ENCODE measurements at regions of chr6 and their contacts with region 1.

Region 1: DNA sequence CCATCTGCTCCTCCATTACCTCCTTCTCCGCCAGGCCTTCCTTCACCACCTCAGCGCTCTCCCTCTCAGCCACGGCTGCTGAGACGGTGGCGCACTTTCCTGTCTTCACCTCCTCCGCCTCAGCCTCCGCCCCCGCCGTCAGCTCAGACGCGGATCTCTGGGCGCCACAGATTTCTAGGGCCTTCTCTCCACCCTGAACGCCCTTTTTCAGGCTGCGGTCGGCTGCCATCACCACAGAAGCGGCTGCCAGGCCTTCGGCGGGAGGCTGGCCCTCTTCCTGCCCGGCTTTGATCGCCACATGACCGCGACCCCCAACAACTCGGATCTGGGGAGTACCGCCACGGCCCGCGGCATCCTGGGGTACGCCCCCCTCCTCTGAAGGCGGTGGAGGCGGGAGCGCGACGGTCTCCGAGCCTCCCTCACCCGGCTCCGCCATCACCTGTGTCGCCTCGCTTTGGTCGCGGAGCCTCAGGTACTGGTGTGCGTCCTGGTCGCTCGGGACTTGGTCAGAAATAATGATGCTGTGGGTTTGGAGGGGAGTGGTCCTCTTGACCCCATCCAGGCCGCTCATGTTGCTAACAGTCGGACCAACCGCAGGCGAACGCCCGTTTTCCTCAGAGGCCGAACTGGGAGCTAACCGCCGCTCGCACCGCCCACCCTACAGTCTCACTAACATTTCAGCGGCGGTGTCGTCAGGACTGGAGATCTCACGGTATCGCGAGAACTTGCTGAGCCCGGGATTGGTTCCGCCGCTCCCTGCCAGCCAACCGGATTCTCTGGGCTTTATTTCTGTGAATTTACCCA is at the start of gene TSPYL1:
- DNase-seq: peak; percentile 93 to 97 (median 96)
- ATAC-seq: peak; percentile 94 to 98 (median 96)
- H3K4me3 ChIP-seq: peak within 1 kb of the TSS; percentile 59 to 98 (median 86)
- H3K27ac ChIP-seq: peak within 1 kb of the TSS; percentile 91 to 99 (median 98)
- H3K4me1 ChIP-seq: peaks cover 6 to 43% (median 19%) of the 10 kb centered on the region in 3 donors
- H3K27me3 ChIP-seq: no peaks in the 10 kb centered on the region
- CTCF ChIP-seq: no peak
- total RNA-seq, gene TSPYL1: 29.4 to 50.3 (median 44.0) TPM

Region 2: GRCh38 chr6:116238083-116238482 is 41.4 kb before region 1 on chr6:
- intact Hi-C with region 1: no loop called
- DNase-seq: no peak
- ATAC-seq: no peak
- H3K4me3 ChIP-seq: no peak overlapping the region
- H3K27ac ChIP-seq: no peak overlapping the region
- H3K4me1 ChIP-seq: no peaks in the 10 kb centered on the region
- H3K27me3 ChIP-seq: no peaks in the 10 kb centered on the region
- CTCF ChIP-seq: no peak

Region 3: GRCh38 chr6:116528780-116529179 is 249.3 kb after region 1 on chr6:
- intact Hi-C with region 1: loop called in 1 of 3 experiments (anchors 10 kb)
- DNase-seq: no peak
- ATAC-seq: no peak
- H3K4me3 ChIP-seq: no peak overlapping the region
- H3K27ac ChIP-seq: no peak overlapping the region
- H3K4me1 ChIP-seq: no peaks in the 10 kb centered on the region
- H3K27me3 ChIP-seq: no peaks in the 10 kb centered on the region
- CTCF ChIP-seq: no peak

Region 4: DNA sequence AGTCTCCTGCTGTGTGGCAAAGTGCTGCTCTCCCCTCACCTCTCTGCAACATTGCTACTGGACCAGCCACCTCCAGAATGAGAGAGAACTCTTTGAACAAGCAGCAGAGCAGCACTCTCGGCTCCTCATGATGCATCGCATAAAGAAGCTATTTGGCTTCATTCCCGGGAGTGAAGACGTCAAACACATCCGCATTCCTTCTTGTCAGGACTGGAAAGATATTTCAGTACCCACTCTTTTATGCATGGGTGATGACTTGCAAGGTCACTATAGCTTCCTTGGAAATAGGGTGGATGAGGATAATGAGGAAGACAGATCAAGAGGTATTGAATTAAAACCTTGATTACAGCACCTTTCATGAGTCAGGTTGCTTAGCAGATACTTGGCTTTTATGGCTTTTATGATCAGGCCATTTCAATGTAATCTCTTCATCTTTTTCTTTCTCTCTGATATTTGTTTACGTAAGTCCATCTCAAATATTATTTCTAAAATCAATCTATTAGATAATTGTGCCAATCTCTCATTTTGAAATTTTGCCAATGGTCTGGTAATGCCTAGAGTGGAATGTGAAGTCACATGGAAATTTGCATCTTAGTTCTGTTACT is 278.5 kb after region 1 on chr6:
- intact Hi-C with region 1: loop called in 1 of 3 experiments (anchors 10 kb)
- DNase-seq: no peak
- ATAC-seq: peak in 3 of 4 donors; percentile 15 to 61 (median 60)
- H3K4me3 ChIP-seq: no peak overlapping the region
- H3K27ac ChIP-seq: no peak overlapping the region
- H3K4me1 ChIP-seq: no peaks in the 10 kb centered on the region
- H3K27me3 ChIP-seq: peaks cover 0 to 2% (median 0%) of the 10 kb centered on the region in 4 donors
- CTCF ChIP-seq: no peak

Measured in pancreas (tissue), 10 donors.